ENCODE measurements at regions of chr10 and their contacts with region 1.

Region 1: DNA sequence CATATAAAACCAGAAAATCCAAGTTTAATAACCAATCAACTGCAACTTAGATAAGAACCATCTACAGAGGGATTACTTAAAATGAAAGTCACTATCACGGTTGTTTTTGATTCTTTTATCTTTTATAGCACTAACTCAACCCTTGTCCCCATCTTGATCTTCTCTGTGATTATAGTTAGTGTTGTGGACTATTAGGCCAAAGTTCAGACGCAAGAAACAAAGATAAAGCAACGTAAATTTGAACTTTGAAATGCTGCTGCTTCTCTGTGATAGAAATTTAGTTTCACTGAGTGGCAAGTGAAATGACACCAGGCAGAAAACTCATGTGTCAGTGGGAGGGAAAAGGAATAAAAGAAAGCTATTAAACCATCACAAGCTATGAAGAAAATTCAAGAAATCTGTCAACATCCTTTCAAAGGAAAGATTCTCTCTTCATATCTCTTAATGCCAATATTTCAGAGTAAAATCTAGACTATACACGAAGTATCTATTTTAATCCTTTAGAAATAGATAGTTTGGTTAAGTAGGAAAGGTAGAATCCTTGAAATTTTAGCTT is 71.8 kb upstream of the MALRD1 start:
- DNase-seq: peak in 1 of 2 experiments; percentile 13
- H3K4me3 ChIP-seq: no peak overlapping the region
- H3K4me3 Mint-ChIP-seq: peak overlapping the region; percentile 22
- H3K27ac Mint-ChIP-seq: peak overlapping the region; percentile 12
- H3K4me1 ChIP-seq: peaks cover 34% of the 10 kb centered on the region
- H3K4me1 Mint-ChIP-seq: peaks cover 13% of the 10 kb centered on the region
- H3K27me3 ChIP-seq: no peaks in the 10 kb centered on the region
- H3K27me3 Mint-ChIP-seq: no peaks in the 10 kb centered on the region
- CTCF ChIP-seq: no peak

Region 2: DNA sequence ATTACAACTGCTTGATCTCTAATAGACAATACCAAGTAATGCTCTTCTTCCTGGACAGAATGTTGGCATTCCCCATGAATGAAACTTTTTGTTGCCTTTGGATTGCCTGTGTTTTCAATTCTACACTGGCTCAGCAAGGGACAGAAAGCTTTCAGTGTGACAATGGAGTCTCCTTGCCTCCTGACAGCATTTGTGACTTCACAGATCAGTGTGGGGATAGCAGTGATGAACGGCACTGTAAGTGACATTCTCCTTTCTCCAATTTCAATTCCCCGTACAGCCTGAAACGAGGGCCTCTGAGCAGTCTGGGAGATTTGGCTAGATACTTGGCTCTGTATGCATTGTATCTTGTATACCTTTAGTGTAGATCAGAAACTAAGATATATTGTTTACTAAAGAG is 72.1 kb after region 1 on chr10:
- CTCF ChIA-PET with region 1: no interaction called
- POLR2A ChIA-PET with region 1: no interaction called
- intact Hi-C with region 1: loop called (anchors 1 kb)
- DNase-seq: peak in 1 of 2 experiments; percentile 26
- H3K4me3 ChIP-seq: peak overlapping the region; percentile 27
- H3K4me3 Mint-ChIP-seq: peak overlapping the region; percentile 64
- H3K27ac Mint-ChIP-seq: peak overlapping the region; percentile 13
- H3K4me1 ChIP-seq: peaks cover 11% of the 10 kb centered on the region
- H3K4me1 Mint-ChIP-seq: peaks cover 26% of the 10 kb centered on the region
- H3K27me3 ChIP-seq: no peaks in the 10 kb centered on the region
- H3K27me3 Mint-ChIP-seq: no peaks in the 10 kb centered on the region
- CTCF ChIP-seq: no peak

Region 3: DNA sequence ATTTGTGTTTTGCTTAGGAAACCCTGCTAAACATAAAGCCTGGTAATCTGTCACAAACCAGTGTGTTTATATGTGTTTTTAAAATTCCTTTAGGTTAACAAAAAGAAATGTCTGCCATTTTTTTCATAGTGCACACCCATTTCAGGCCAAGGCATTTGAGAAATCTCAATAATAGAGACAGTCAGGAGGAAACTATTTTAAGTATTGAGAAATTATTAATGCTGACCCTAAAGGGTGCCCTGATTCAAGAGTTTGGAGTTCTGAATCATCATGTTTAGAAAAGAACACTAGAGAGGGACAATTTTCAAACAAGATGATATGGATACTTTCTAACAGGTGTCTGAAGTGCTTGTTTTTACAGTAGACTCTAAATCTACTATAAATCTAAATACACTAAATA is 100.5 kb after region 1 on chr10:
- CTCF ChIA-PET with region 1: no interaction called
- POLR2A ChIA-PET with region 1: no interaction called
- intact Hi-C with region 1: no loop called
- DNase-seq: no peak
- H3K4me3 ChIP-seq: no peak overlapping the region
- H3K4me3 Mint-ChIP-seq: no peak overlapping the region
- H3K27ac Mint-ChIP-seq: no peak overlapping the region
- H3K4me1 ChIP-seq: no peaks in the 10 kb centered on the region
- H3K4me1 Mint-ChIP-seq: no peaks in the 10 kb centered on the region
- H3K27me3 ChIP-seq: no peaks in the 10 kb centered on the region
- H3K27me3 Mint-ChIP-seq: no peaks in the 10 kb centered on the region
- CTCF ChIP-seq: no peak

Region 4: DNA sequence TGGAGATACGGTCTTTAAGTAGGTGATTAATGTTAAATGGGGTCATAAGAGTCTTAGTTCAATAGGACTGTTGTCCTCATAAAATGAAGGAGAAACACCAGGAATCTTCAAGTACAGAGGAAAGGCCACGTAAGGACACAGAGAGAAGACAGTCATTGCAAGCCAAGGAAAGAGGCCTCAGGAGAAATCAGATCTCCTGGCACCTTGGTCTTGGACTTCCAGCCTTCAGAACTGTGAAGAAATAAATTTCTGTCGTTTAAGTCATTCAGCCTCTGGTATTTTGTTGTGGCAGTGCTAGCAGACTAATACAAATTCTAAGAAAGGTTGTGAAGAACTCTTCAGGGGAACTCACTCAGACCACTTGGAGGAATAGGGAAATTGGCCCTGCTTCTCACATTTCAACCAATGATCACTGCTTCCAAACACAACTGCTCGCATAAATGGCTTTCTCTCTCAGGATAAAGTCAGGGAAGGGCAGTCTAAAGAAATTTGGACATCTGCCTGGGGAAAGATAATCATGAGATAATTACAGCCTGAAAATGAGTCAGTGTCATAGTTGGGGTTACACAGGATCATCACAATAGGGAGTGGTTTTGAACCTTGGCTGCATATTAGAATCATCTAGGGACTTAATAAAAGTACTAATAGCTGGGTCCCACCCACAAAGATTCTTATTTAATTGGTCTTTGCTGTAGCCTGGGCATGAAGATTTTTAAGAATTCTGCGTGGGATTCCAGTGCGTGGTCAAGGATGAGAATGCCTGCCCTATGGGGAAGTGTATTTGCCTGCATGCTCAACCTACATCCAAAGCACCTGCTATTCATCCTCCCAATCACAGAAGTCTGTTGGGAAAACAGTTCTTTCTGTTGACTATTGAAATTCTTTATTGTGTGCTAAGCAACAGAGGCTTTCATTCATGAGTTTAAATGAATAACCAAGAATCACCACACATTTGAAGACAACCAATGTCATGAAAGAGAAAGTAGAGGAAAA is 528.8 kb after region 1 on chr10:
- CTCF ChIA-PET with region 1: no interaction called
- POLR2A ChIA-PET with region 1: no interaction called
- intact Hi-C with region 1: no loop called
- DNase-seq: no peak
- H3K4me3 ChIP-seq: no peak overlapping the region
- H3K4me3 Mint-ChIP-seq: no peak overlapping the region
- H3K27ac Mint-ChIP-seq: no peak overlapping the region
- H3K4me1 ChIP-seq: no peaks in the 10 kb centered on the region
- H3K4me1 Mint-ChIP-seq: no peaks in the 10 kb centered on the region
- H3K27me3 ChIP-seq: no peaks in the 10 kb centered on the region
- H3K27me3 Mint-ChIP-seq: no peaks in the 10 kb centered on the region
- CTCF ChIP-seq: no peak